Activated CD4-positive, alpha-beta memory T cell treated with anti-CD3 and anti-CD28 coated beads for 36 hours (primary cell): ENCODE measurements at regions of chr18 and their contacts with region 1.

Region 1: GRCh38 chr18:3585656-3586509 is 135.9 kb downstream of the TGIF1 start:
- DNase-seq: peak; percentile 86
- H3K4me3 Mint-ChIP-seq: no peak overlapping the region
- H3K27ac Mint-ChIP-seq: peak overlapping the region; percentile 69
- H3K4me1 Mint-ChIP-seq: peaks cover 45% of the 10 kb centered on the region
- H3K27me3 Mint-ChIP-seq: no peaks in the 10 kb centered on the region

Region 2: GRCh38 chr18:3281456-3282400 is 304.2 kb before region 1 on chr18:
- CTCF ChIA-PET with region 1: interaction called, 26 read pairs
- POLR2A ChIA-PET with region 1: no interaction called
- intact Hi-C with region 1: loop called (anchors 1 kb)
- DNase-seq: no peak
- H3K4me3 Mint-ChIP-seq: no peak overlapping the region
- H3K27ac Mint-ChIP-seq: no peak overlapping the region
- H3K4me1 Mint-ChIP-seq: peaks cover 6% of the 10 kb centered on the region
- H3K27me3 Mint-ChIP-seq: no peaks in the 10 kb centered on the region

Region 3: GRCh38 chr18:3305354-3305762 is 280.5 kb before region 1 on chr18:
- CTCF ChIA-PET with region 1: interaction called, 3 read pairs
- POLR2A ChIA-PET with region 1: no interaction called
- intact Hi-C with region 1: loop called (anchors 1 kb)
- DNase-seq: peak; percentile 77
- H3K4me3 Mint-ChIP-seq: no peak overlapping the region
- H3K27ac Mint-ChIP-seq: peak overlapping the region; percentile 80
- H3K4me1 Mint-ChIP-seq: peaks cover 21% of the 10 kb centered on the region
- H3K27me3 Mint-ChIP-seq: peaks cover 15% of the 10 kb centered on the region

Region 4: DNA sequence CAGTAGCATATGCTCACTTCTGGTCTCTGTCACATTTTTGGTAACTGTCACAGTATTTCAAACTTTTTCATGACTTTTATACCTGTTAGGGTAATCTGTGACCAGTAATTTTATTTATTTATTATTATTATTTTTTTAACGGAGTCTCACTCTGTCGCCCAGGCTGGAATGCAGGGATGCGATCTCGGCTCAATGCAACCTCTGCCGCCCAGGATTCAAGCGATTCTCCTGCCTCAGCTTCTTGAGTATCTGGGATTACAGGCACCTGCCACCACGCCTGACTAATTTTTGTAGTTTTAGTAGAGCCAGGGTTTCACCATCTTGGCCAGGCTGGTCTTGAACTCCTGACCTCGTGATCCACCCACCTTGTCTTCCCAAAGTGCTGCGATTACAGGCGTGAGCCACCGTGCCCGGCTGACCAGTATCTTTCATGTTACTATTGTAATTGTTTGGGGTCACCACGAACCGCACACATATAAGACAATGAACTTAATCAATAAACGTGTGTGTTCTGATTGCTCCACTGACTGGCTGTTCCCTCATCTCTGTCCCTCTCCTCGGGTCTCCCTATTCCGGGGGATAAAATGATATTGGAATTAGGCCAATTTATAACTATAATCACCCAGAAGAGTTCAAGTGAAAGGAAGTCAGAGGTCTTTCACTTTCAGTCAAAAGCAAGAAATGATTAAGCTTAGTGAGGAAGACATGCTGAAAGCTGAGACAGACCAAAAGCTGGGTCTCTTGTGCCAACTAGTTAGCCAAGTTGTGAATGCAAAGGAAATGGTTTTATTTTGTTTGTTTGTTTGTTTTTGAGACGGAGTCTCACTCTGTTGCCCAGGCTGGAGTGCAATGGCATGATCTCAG is 113.0 kb before region 1 on chr18:
- CTCF ChIA-PET with region 1: interaction called, 17 read pairs
- POLR2A ChIA-PET with region 1: no interaction called
- intact Hi-C with region 1: no loop called
- DNase-seq: peak; percentile 41
- H3K4me3 Mint-ChIP-seq: peak overlapping the region; percentile 23
- H3K27ac Mint-ChIP-seq: peak overlapping the region; percentile 8
- H3K4me1 Mint-ChIP-seq: peaks cover 17% of the 10 kb centered on the region
- H3K27me3 Mint-ChIP-seq: peaks cover 5% of the 10 kb centered on the region

Region 5: DNA sequence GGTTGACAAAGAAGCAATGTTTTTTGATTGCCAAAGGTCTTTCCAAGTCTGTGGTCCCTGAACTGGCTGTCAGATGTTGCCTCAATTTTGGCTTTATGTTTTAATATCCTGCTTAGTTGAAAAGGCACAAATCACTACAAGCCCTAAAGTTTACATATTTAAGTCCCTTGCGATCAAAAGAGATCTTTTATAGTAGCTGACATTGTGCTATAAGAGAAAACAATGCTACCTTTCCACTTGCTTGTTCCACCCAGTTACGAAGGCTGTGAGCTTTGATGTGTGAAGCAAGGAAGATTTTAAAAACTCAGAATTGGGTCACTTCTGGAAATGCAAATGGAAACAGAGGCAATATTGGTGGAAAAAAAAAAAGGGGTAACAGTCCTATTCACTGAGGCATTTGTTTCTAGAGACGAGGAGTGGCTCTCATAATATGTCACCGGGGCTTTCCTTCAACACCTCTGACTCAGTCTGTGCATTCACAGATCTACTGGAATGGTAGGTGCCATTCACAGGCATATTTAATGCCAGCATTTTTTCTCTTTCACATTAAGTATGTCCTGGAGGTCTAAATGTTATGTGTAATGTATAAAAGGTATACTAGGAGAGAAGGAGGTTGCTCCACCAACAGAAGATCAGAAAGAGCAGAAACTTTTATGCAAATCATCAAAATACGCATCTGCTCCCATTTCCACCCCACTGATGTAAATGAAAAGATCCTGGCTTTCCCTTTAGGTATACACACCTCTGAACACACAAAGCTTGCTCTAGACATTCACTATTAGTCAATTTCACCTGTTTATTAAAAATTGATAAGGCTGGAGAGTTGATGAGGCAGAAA is 44.1 kb before region 1 on chr18:
- CTCF ChIA-PET with region 1: interaction called, 11 read pairs
- POLR2A ChIA-PET with region 1: interaction called, 3 read pairs
- intact Hi-C with region 1: loop called (anchors 1 kb)
- DNase-seq: peak; percentile 68
- H3K4me3 Mint-ChIP-seq: peak overlapping the region; percentile 8
- H3K27ac Mint-ChIP-seq: peak overlapping the region; percentile 59
- H3K4me1 Mint-ChIP-seq: peaks cover 35% of the 10 kb centered on the region
- H3K27me3 Mint-ChIP-seq: no peaks in the 10 kb centered on the region

Region 6: GRCh38 chr18:3634250-3634939 is 48.5 kb after region 1 on chr18:
- CTCF ChIA-PET with region 1: no interaction called
- POLR2A ChIA-PET with region 1: no interaction called
- intact Hi-C with region 1: no loop called
- DNase-seq: no peak
- H3K4me3 Mint-ChIP-seq: no peak overlapping the region
- H3K27ac Mint-ChIP-seq: no peak overlapping the region
- H3K4me1 Mint-ChIP-seq: peaks cover 22% of the 10 kb centered on the region
- H3K27me3 Mint-ChIP-seq: no peaks in the 10 kb centered on the region